Natural killer cell (primary cell): ENCODE measurements at regions of chr19 and their contacts with region 1.

Region 1: DNA sequence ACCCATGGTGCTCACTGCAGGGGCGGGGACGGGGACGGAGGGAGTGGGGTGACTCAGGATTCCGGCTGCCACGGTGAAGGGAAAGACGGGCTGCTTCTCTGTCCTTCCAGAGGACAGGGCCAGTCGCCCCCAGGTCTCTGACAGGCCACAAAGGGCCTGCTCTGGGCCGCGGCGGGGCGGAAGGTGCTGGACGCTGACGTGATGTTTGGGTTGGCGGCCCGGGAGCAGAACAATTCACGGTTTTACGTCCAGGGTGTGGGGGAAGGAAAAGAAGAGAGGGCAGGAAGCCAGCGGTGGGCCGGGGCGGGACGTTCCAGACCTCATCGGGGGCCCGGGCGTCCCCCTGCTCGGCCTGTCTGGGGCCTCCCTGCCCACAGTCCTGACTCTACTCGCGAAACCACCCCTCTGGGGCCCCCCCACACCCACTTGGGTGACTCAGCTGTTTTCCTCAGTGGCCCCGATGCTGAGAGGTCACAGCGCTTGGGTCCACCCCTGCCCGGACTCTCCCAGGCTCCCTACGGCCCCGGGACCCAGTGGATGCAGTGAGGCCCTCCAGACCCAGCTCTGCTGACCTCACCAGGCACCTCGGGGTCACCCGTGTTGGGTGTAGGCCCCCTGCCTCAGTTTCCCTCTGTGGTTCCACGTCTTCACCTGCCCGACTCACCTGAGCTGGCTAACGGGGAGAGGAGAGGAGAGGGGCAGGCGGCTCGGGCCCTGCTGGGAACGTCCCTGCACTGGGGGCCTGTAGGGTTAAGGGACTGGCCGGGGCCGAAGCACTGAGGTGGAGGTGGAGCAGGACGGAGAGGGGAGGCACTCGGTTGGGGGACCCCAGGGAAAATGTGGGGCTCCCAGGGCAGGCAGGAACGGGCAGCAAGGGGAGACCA is 29.2 kb downstream of the PIP5K1C start:
- DNase-seq: peak; percentile 35 to 74
- ATAC-seq: peak; percentile 75 to 85 (median 81)
- H3K4me3 ChIP-seq: peak overlapping the region; percentile 9
- H3K4me3 Mint-ChIP-seq: peak overlapping the region; percentile 89
- H3K27ac ChIP-seq: peak overlapping the region; percentile 80
- H3K27ac Mint-ChIP-seq: peak overlapping the region; percentile 83 to 93
- H3K4me1 ChIP-seq: peaks cover 31% of the 10 kb centered on the region
- H3K4me1 Mint-ChIP-seq: peaks cover 22 to 55% of the 10 kb centered on the region in 2 donors
- H3K27me3 ChIP-seq: no peaks in the 10 kb centered on the region
- H3K27me3 Mint-ChIP-seq: no peaks in the 10 kb centered on the region
- CTCF ChIP-seq: no peak

Region 2: DNA sequence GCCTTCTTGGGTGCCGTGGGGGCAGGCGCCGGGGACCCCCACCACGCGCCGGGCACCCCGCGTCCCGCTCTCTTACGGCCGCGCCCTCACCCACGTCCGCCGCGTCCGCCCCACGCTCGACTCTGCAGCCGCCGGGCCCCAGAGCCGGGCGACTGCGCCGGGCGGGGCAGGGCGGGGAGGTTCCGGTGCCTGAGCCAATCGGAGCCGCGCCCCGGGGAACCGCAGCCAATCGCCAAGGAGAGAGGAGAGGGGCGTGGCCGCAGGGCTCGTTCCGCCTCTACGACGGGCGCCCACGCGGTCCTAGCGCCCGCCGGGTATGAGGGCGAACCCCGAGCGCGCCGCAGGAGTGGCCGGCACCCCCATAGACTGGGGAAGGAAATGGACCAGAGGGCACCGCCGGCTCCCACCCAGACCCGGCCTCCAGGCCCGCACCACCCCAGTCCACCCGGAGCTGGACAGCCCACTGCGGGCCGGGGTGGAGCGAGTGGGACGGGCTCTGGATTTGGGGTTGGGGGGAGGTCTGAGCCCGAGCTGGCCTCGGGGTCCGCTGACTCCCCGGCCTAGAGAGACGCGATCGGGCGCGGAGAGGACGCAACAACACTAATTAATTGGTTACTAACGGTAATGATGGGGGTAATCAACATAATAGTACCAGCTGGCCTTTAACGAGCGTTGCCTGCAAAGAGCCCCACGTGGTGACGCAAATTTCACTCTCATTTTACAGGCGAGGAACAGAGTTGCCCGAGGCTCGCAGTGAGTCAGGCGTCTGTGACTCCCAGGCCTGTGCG is 113.4 kb before region 1 on chr19 and contains the start of gene MFSD12:
- intact Hi-C with region 1: no loop called
- DNase-seq: peak; percentile 97
- ATAC-seq: peak; percentile 85 to 97 (median 92)
- H3K4me3 ChIP-seq: peak within 1 kb of the TSS; percentile 89
- H3K4me3 Mint-ChIP-seq: peak within 1 kb of the TSS; percentile 96
- H3K27ac ChIP-seq: peak within 1 kb of the TSS; percentile 64
- H3K27ac Mint-ChIP-seq: peak within 1 kb of the TSS; percentile 83 to 98
- H3K4me1 ChIP-seq: peaks cover 50% of the 10 kb centered on the region
- H3K4me1 Mint-ChIP-seq: peaks cover 21 to 37% of the 10 kb centered on the region in 2 donors
- H3K27me3 ChIP-seq: no peaks in the 10 kb centered on the region
- H3K27me3 Mint-ChIP-seq: no peaks in the 10 kb centered on the region
- CTCF ChIP-seq: peak; percentile 5
- total RNA-seq, gene MFSD12: 29.8 to 34.5 (median 33.6) TPM

Region 3: GRCh38 chr19:3626473-3627350 is 44.3 kb before region 1 on chr19 and contains the start of gene CACTIN:
- intact Hi-C with region 1: no loop called
- DNase-seq: peak; percentile 97 to 99
- ATAC-seq: peak; percentile 96 to 99 (median 97)
- H3K4me3 ChIP-seq: peak within 1 kb of the TSS; percentile 72
- H3K4me3 Mint-ChIP-seq: peak within 1 kb of the TSS; percentile 99
- H3K27ac ChIP-seq: peak within 1 kb of the TSS; percentile 94
- H3K27ac Mint-ChIP-seq: peak within 1 kb of the TSS; percentile 96 to 99
- H3K4me1 ChIP-seq: peaks cover 27% of the 10 kb centered on the region
- H3K4me1 Mint-ChIP-seq: peaks cover 17 to 29% of the 10 kb centered on the region in 2 donors
- H3K27me3 ChIP-seq: no peaks in the 10 kb centered on the region
- H3K27me3 Mint-ChIP-seq: no peaks in the 10 kb centered on the region
- CTCF ChIP-seq: no peak
- total RNA-seq, gene CACTIN: 33.6 to 42.2 (median 40.8) TPM

Region 4: GRCh38 chr19:3687774-3688706 is 17.0 kb after region 1 on chr19:
- intact Hi-C with region 1: loop called (anchors 2 kb)
- DNase-seq: peak in 1 of 2 donors; percentile 60
- ATAC-seq: peak; percentile 56 to 72 (median 68)
- H3K4me3 ChIP-seq: peak overlapping the region; percentile 17
- H3K4me3 Mint-ChIP-seq: peak overlapping the region; percentile 85
- H3K27ac ChIP-seq: no peak overlapping the region
- H3K27ac Mint-ChIP-seq: peak overlapping the region; percentile 50 to 79
- H3K4me1 ChIP-seq: peaks cover 23% of the 10 kb centered on the region
- H3K4me1 Mint-ChIP-seq: peaks cover 23 to 47% of the 10 kb centered on the region in 2 donors
- H3K27me3 ChIP-seq: no peaks in the 10 kb centered on the region
- H3K27me3 Mint-ChIP-seq: no peaks in the 10 kb centered on the region
- CTCF ChIP-seq: no peak

Region 5: GRCh38 chr19:3700221-3701032 is 29.4 kb after region 1 on chr19 and contains the start of gene PIP5K1C:
- intact Hi-C with region 1: loop called (anchors 1 kb)
- DNase-seq: peak; percentile 95 to 96
- ATAC-seq: peak; percentile 93 to 99 (median 95)
- H3K4me3 ChIP-seq: peak within 1 kb of the TSS; percentile 51
- H3K4me3 Mint-ChIP-seq: peak within 1 kb of the TSS; percentile 84
- H3K27ac ChIP-seq: no peak within 1 kb of the TSS
- H3K27ac Mint-ChIP-seq: peak within 1 kb of the TSS; percentile 45 to 88
- H3K4me1 ChIP-seq: peaks cover 28% of the 10 kb centered on the region
- H3K4me1 Mint-ChIP-seq: peaks cover 12 to 45% of the 10 kb centered on the region in 2 donors
- H3K27me3 ChIP-seq: no peaks in the 10 kb centered on the region
- H3K27me3 Mint-ChIP-seq: no peaks in the 10 kb centered on the region
- CTCF ChIP-seq: peak; percentile 75
- total RNA-seq, gene PIP5K1C: 35.0 to 49.2 (median 36.8) TPM

Region 6: GRCh38 chr19:3712663-3713611 is 41.9 kb after region 1 on chr19:
- intact Hi-C with region 1: no loop called
- DNase-seq: no peak
- ATAC-seq: no peak
- H3K4me3 ChIP-seq: no peak overlapping the region
- H3K4me3 Mint-ChIP-seq: no peak overlapping the region
- H3K27ac ChIP-seq: no peak overlapping the region
- H3K27ac Mint-ChIP-seq: no peak overlapping the region
- H3K4me1 ChIP-seq: no peaks in the 10 kb centered on the region
- H3K4me1 Mint-ChIP-seq: peaks cover 0 to 5% of the 10 kb centered on the region in 2 donors
- H3K27me3 ChIP-seq: no peaks in the 10 kb centered on the region
- H3K27me3 Mint-ChIP-seq: no peaks in the 10 kb centered on the region
- CTCF ChIP-seq: no peak

Region 7: DNA sequence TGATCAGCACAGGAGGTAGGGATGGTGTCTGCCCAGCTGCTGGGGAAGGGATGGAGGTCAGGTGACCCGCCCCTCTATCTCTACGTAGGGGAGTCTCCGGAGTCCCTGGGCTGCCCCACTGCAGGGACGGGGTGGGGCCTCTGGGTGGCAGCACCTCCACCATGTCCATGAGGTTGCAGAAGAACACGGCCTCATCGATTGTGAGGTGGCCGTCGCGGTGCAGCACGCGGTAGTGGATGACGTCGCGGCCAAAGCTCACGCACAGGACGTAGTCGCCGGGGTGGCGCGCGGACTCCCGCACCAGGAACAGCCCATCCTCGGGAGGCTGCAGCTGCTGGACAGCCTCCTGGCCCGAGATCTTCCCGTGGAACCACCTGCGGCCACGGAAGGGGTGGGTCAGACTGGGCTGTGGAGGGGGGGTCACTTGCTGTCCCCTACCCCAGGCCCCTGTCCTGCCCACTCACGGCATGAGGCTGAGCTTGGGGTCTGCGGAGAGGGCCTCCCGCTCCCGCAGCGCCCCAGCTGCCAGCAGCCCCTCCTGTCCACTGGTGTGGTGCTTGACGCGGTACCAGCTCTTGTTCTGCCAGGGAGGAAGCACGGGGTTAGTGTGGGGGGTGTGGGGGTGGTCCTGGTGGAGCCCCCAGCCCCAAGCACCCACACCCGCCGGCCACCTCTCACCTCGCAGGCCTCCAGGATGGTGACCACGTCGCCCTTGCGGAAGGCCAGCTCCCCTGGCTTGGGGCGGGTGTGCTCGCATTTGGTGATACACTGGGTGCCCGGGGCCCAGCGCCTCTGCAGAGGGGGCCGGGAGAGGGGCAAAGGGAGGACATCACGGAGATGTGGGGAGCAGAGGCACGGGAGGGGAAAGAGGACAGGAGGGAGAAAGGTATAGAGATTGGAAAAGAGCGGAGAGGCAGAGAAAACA is 112.9 kb after region 1 on chr19:
- intact Hi-C with region 1: no loop called
- DNase-seq: peak; percentile 67 to 70
- ATAC-seq: peak; percentile 66 to 71 (median 70)
- H3K4me3 ChIP-seq: peak overlapping the region; percentile 90
- H3K4me3 Mint-ChIP-seq: peak overlapping the region; percentile 90
- H3K27ac ChIP-seq: peak overlapping the region; percentile 73
- H3K27ac Mint-ChIP-seq: peak overlapping the region; percentile 83 to 93
- H3K4me1 ChIP-seq: peaks cover 61% of the 10 kb centered on the region
- H3K4me1 Mint-ChIP-seq: peaks cover 22 to 44% of the 10 kb centered on the region in 2 donors
- H3K27me3 ChIP-seq: no peaks in the 10 kb centered on the region
- H3K27me3 Mint-ChIP-seq: no peaks in the 10 kb centered on the region
- CTCF ChIP-seq: peak; percentile 72